Panc1 (cell line): ENCODE measurements at regions of chr4 and their contacts with region 1.

Region 1: GRCh38 chr4:165343353-165344191 is 16.1 kb downstream of the MSMO1 start:
- DNase-seq: no peak
- ATAC-seq: no peak
- H3K4me3 ChIP-seq: no peak overlapping the region
- H3K27ac ChIP-seq: no peak overlapping the region
- H3K4me1 ChIP-seq: no peaks in the 10 kb centered on the region
- H3K27me3 ChIP-seq: no peaks in the 10 kb centered on the region
- CTCF ChIP-seq: peak; percentile 59

Region 2: DNA sequence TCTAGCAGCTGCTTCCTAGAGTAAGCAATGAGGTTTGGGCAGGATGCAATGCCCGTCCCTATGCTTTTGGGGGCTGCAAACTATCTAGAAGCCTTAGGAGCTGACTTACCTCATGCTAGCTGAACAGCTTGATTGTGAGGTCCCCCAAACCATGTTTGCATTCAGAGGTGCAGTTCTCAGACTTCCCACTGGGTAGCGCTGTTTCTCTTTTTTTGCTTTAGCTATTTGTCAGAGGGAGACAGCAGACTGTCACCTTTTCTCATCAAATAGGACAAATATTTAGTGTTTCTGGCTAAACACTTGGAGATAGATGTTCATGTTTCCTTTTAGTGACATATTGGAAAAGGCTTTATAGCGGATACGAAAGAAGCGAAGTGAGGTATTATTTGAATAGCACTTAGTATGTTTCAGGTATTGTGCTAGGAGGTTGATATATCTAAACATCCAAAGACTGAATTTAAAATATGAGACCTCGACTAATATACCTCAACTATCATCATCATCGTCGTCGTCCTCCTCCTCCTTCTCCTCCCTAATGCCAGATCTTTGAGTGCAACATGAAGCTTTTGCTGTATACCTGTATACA is 212.2 kb before region 1 on chr4:
- CTCF ChIA-PET with region 1: interaction called, 4 read pairs
- POLR2A ChIA-PET with region 1: no interaction called
- in situ Hi-C with region 1: no loop called
- intact Hi-C with region 1: loop called (anchors 2 kb)
- DNase-seq: peak; percentile 55
- ATAC-seq: peak; percentile 87
- H3K4me3 ChIP-seq: no peak overlapping the region
- H3K27ac ChIP-seq: no peak overlapping the region
- H3K4me1 ChIP-seq: no peaks in the 10 kb centered on the region
- H3K27me3 ChIP-seq: no peaks in the 10 kb centered on the region; the same call in 1 of the 2 replicates
- CTCF ChIP-seq: peak; percentile 83